GM12878 (cell line): ENCODE measurements at regions of chr9 and their contacts with region 1.

Region 1: GRCh38 chr9:37337301-37337890 is 85.1 kb upstream of the GRHPR start:
- DNase-seq: no peak
- ATAC-seq: peak; percentile 47
- H3K4me3 ChIP-seq: no peak overlapping the region; the same call in 1 of the 2 replicates
- H3K27ac ChIP-seq: peak overlapping the region; percentile 21
- H3K4me1 ChIP-seq: peaks cover 34% of the 10 kb centered on the region
- H3K27me3 ChIP-seq: no peaks in the 10 kb centered on the region
- CTCF ChIP-seq: no peak
- EP300 ChIP-seq: no peak
- POLR2A ChIP-seq: no peak
- RAD21 ChIP-seq: no peak

Region 2: GRCh38 chr9:37350486-37351190 is 13.2 kb after region 1 on chr9:
- CTCF ChIA-PET with region 1: interaction called, 6 read pairs
- POLR2A ChIA-PET with region 1: interaction called, 4 read pairs
- RAD21 ChIA-PET with region 1: interaction called, 3 read pairs
- SMC1A ChIA-PET with region 1: interaction called, 15 read pairs
- in situ Hi-C with region 1: no loop called
- intact Hi-C with region 1: no loop called
- DNase-seq: no peak
- ATAC-seq: no peak
- H3K4me3 ChIP-seq: no peak overlapping the region
- H3K27ac ChIP-seq: no peak overlapping the region
- H3K4me1 ChIP-seq: no peaks in the 10 kb centered on the region
- H3K27me3 ChIP-seq: no peaks in the 10 kb centered on the region
- CTCF ChIP-seq: no peak
- EP300 ChIP-seq: no peak
- POLR2A ChIP-seq: no peak
- RAD21 ChIP-seq: no peak

Region 3: DNA sequence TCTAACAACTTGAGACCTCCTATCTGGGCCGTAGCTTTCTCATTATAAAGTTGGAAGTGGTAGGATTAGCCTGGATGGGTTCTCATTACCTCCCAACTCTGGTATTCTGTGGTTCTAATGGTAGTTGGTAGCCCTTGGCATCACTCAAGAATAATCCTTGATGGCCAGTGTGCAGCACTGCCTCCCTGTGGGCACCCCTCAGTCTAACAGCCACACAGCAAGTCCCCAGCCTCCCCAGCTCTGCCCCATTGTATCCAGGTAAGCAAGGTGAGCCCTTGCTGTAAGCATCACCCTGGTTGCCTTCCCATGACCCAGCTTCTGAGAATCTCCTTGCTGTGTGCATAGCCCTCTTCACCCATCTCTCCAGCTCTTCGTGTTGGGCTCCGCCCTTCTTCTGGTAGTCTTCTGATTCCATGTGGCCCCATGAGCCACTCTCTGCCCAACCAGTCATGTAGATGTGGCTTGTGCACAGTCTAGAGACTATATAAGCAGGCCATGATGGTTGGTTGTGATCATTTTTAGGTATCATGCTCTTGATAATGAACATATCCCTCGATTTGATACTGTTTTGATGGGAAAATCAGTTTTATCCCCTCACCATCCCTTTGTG is 27.5 kb after region 1 on chr9:
- CTCF ChIA-PET with region 1: interaction called, 15 read pairs
- POLR2A ChIA-PET with region 1: interaction called, 6 read pairs
- RAD21 ChIA-PET with region 1: interaction called, 10 read pairs
- SMC1A ChIA-PET with region 1: interaction called, 25 read pairs
- in situ Hi-C with region 1: no loop called
- intact Hi-C with region 1: no loop called
- DNase-seq: no peak
- ATAC-seq: peak; percentile 67
- H3K4me3 ChIP-seq: no peak overlapping the region
- H3K27ac ChIP-seq: no peak overlapping the region
- H3K4me1 ChIP-seq: peaks cover 19% of the 10 kb centered on the region
- H3K27me3 ChIP-seq: no peaks in the 10 kb centered on the region
- CTCF ChIP-seq: peak; percentile 26 to 53 (median 48); a peak in 5 of 6 replicates
- EP300 ChIP-seq: no peak
- POLR2A ChIP-seq: no peak
- RAD21 ChIP-seq: peak; percentile 42; the same call in 1 of the 2 replicates